ENCODE measurements at regions of chr5 and their contacts with region 1.

Region 1: GRCh38 chr5:157731272-157732129 is at the start of gene THG1L:
- DNase-seq: peak; percentile 99
- H3K4me3 ChIP-seq: peak within 1 kb of the TSS; percentile 40 to 58 (median 51)
- H3K27ac ChIP-seq: peak within 1 kb of the TSS; percentile 84 to 93 (median 88)
- H3K4me1 ChIP-seq: peaks cover 0 to 5% of the 10 kb centered on the region in 2 donors
- H3K27me3 ChIP-seq: no peaks in the 10 kb centered on the region
- CTCF ChIP-seq: no peak
- POLR2A ChIP-seq: peak in 1 of 2 donors; percentile 79
- total RNA-seq, gene THG1L: 10.3 to 13.9 (median 12.0) TPM

Region 2: DNA sequence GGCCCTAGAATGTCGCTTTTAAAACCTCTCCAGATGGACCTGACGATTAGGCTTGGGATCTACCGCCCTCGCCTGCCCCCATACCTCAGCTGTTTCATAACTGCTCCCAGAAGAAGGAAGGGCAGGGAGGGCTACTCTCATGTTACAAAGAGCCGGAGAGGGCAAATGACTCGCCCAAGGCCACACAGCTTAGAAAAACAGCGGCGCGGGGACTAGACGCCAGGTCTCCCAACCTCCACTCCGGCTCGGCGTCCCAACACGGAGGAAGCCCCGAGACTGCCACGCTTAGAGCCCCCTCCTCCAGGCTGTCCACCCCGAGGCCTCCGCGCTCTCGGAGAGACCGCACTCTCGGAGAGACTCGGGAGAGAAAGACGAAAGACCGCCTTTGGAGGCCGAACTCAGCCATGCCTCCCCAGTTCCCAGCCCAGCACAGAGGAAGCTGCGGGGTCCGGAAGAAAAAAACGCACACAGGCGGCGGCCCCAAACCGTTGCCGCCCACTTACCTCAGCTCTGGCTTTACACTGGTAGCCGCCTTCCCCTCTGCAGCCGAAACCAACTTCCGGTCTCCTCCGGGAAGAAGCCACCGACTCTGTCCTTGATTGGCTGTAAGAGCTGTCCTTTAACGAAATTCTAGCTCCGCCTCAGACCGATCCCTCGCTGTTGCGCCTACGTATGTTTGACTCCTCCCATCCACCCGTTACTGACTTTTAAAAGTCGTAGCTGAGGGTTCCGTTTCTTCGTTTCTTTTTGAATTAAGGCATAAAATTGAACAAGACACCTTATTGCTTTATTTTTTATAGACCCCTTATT is 589.0 kb before region 1 on chr5 and contains the start of gene MED7:
- intact Hi-C with region 1: loop called (anchors 10 kb)
- DNase-seq: peak; percentile 92 to 93
- H3K4me3 ChIP-seq: peak within 1 kb of the TSS; percentile 67 to 86 (median 76)
- H3K27ac ChIP-seq: peak within 1 kb of the TSS; percentile 77 to 86 (median 81)
- H3K4me1 ChIP-seq: peaks cover 10% of the 10 kb centered on the region in 2 donors
- H3K27me3 ChIP-seq: no peaks in the 10 kb centered on the region
- CTCF ChIP-seq: no peak
- POLR2A ChIP-seq: peak; percentile 5 to 84
- total RNA-seq, gene MED7: 12.9 to 19.8 (median 15.0) TPM